ENCODE measurements at regions of chr18 and their contacts with region 1.

Region 1: GRCh38 chr18:57814555-57814954 is 11.4 kb upstream of the ATP8B1 start:
- DNase-seq: no peak
- ATAC-seq: no peak
- H3K4me3 Mint-ChIP-seq: no peak overlapping the region
- H3K27ac Mint-ChIP-seq: no peak overlapping the region
- H3K4me1 Mint-ChIP-seq: peaks cover 2% of the 10 kb centered on the region
- H3K27me3 Mint-ChIP-seq: no peaks in the 10 kb centered on the region; the same call in 1 of the 2 replicates
- CTCF ChIP-seq: no peak

Region 2: GRCh38 chr18:57759640-57760039 is 54.9 kb before region 1 on chr18:
- CTCF ChIA-PET with region 1: no interaction called
- POLR2A ChIA-PET with region 1: no interaction called
- DNase-seq: no peak
- ATAC-seq: no peak
- H3K4me3 Mint-ChIP-seq: no peak overlapping the region
- H3K27ac Mint-ChIP-seq: no peak overlapping the region
- H3K4me1 Mint-ChIP-seq: no peaks in the 10 kb centered on the region
- H3K27me3 Mint-ChIP-seq: no peaks in the 10 kb centered on the region
- CTCF ChIP-seq: no peak

Region 3: DNA sequence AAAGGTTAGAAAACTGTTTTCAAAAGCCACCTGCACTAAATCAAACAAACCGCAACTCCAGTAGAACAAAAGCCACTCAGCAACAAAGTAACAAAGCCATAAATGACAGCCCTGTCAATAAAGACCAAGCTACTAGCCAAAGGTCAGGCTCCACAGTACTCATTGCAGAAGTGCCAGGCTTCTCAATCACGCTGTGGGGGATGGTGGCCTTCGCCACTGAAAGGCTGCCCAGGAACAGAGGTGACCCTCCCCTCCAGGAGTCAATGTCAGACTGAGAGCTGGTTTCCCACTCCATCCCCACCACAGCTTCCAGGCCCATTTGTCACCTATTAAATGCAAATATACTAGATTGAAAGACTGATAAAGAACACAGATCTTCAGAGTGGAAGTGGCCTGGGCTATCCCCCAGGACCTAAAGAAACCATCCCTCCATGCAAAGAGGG is 17.3 kb before region 1 on chr18:
- CTCF ChIA-PET with region 1: no interaction called
- POLR2A ChIA-PET with region 1: interaction called, 11 read pairs
- DNase-seq: no peak
- ATAC-seq: no peak
- H3K4me3 Mint-ChIP-seq: no peak overlapping the region
- H3K27ac Mint-ChIP-seq: no peak overlapping the region
- H3K4me1 Mint-ChIP-seq: peaks cover 31% of the 10 kb centered on the region
- H3K27me3 Mint-ChIP-seq: peaks cover 32% of the 10 kb centered on the region
- CTCF ChIP-seq: no peak

Region 4: GRCh38 chr18:57864615-57865121 is 50.1 kb after region 1 on chr18:
- CTCF ChIA-PET with region 1: no interaction called
- POLR2A ChIA-PET with region 1: no interaction called
- DNase-seq: no peak
- ATAC-seq: no peak
- H3K4me3 Mint-ChIP-seq: no peak overlapping the region
- H3K27ac Mint-ChIP-seq: no peak overlapping the region
- H3K4me1 Mint-ChIP-seq: no peaks in the 10 kb centered on the region
- H3K27me3 Mint-ChIP-seq: no peaks in the 10 kb centered on the region
- CTCF ChIP-seq: no peak

Region 5: GRCh38 chr18:57915865-57916582 is 101.5 kb after region 1 on chr18:
- CTCF ChIA-PET with region 1: no interaction called
- POLR2A ChIA-PET with region 1: no interaction called
- DNase-seq: no peak
- ATAC-seq: peak; percentile 43
- H3K4me3 Mint-ChIP-seq: no peak overlapping the region
- H3K27ac Mint-ChIP-seq: no peak overlapping the region
- H3K4me1 Mint-ChIP-seq: peaks cover 13% of the 10 kb centered on the region
- H3K27me3 Mint-ChIP-seq: peaks cover 3% of the 10 kb centered on the region; the same call in 1 of the 2 replicates
- CTCF ChIP-seq: no peak

Region 6: DNA sequence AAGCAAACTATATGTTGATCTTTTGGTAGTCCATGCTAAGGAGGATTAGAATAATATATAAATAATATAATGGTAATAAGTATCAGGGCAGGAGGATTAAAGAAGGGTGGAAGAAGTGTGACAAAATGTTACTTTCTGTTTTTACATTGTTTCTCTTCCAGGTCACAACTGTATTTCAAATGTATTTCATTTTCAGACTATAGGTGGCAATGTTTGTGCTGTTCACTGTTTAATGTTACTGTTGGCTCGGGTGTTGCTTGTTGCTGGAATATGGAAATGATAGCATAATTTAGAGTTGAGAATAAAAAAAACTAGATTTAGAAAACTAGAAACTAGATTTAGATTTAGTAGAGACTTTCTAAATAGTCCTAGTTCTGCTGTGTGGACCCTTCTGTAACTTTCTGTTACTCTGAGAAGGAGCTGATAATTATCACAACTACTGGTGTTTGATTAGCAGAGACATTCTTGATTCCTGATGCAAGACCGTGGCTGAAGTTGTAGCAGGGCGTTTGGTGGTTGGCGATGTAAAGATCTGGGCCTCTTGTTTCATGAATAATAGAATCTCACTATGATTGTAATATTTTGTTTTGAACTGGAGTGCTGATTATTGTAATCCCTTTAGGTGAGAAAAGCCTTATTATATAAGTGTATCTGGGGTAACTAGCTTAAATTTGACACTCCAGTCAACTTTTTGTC is 237.4 kb after region 1 on chr18:
- CTCF ChIA-PET with region 1: no interaction called
- POLR2A ChIA-PET with region 1: no interaction called
- DNase-seq: no peak
- ATAC-seq: no peak
- H3K4me3 Mint-ChIP-seq: no peak overlapping the region
- H3K27ac Mint-ChIP-seq: 0 out of 2 replicates have a peak overlapping the region, but pooled peaks have one; percentile 7
- H3K4me1 Mint-ChIP-seq: peaks cover 54% of the 10 kb centered on the region
- H3K27me3 Mint-ChIP-seq: no peaks in the 10 kb centered on the region
- CTCF ChIP-seq: no peak

Measured in WTC11 (cell line).